H1 (cell line): ENCODE measurements at regions of chr10 and their contacts with region 1.

Region 1: DNA sequence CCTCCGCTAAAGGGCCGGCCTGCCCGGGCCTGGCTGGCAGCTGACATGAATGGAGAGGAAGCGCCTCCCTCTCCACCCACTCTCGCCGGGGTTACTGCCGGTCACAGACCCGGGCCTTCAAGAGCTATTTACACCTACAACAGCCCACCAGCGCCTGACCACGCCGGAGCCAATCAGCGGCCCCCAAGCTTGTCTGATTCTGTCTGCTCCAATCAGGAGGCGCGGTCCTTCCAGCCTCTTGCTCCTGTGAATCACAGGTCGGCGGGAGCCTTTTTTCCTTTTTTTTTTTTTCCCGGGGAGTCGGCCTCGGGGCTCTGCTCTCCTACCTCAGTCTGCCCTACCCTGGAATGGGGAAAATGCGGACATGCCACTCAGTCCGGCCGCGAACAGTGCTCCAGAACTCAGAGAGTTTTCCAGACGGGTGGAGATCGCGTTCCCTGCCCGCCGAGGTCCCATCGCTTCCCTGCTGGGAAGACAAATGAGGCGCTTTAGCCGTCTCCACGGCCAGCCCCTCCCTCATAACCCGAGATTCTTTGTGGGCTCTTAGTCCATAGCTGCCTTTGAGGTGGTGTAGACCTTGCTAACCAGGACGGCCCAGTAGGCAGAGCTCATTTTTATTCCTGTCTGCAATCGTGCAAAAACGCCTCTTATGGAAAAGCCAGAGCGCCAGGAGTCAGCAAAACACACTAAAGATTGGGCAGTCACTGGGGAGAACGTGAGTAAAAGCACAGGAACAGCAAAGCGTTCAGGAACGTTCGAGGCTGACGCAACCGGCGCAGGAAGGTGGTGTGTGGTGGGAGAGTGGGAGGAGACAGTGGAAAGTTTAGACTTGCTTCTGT is 26.5 kb downstream of the SCD start:
- DNase-seq: peak; percentile 91 to 98
- H3K4me3 ChIP-seq: peak overlapping the region; percentile 63 to 71 (median 66)
- H3K27ac ChIP-seq: peak overlapping the region; percentile 90
- H3K4me1 ChIP-seq: peaks cover 8 to 25% (median 9%) of the 10 kb centered on the region in 4 experiments
- H3K27me3 ChIP-seq: no peaks in the 10 kb centered on the region
- CTCF ChIP-seq: no peak
- EP300 ChIP-seq: peak in 1 of 2 experiments; percentile 10; a peak in 1 of 3 replicates
- POLR2A ChIP-seq: peak; percentile 44 to 58; a peak in 2 of 3 replicates
- RAD21 ChIP-seq: no peak

Region 2: GRCh38 chr10:100315615-100316014 is 57.9 kb before region 1 on chr10:
- CTCF ChIA-PET with region 1: no interaction called
- POLR2A ChIA-PET with region 1: no interaction called
- DNase-seq: no peak
- H3K4me3 ChIP-seq: no peak overlapping the region
- H3K27ac ChIP-seq: no peak overlapping the region
- H3K4me1 ChIP-seq: no peaks in the 10 kb centered on the region
- H3K27me3 ChIP-seq: no peaks in the 10 kb centered on the region; a peak in 1 of 7 replicates
- CTCF ChIP-seq: no peak
- EP300 ChIP-seq: no peak
- POLR2A ChIP-seq: no peak
- RAD21 ChIP-seq: no peak

Region 3: GRCh38 chr10:100346765-100347567 is 26.6 kb before region 1 on chr10 and contains the start of gene SCD:
- CTCF ChIA-PET with region 1: interaction called, 7 read pairs
- POLR2A ChIA-PET with region 1: interaction called, 85 read pairs
- DNase-seq: peak; percentile 86 to 91
- H3K4me3 ChIP-seq: peak within 1 kb of the TSS; percentile 85 to 95 (median 90)
- H3K27ac ChIP-seq: peak within 1 kb of the TSS; percentile 80
- H3K4me1 ChIP-seq: peaks cover 10 to 30% (median 20%) of the 10 kb centered on the region in 4 experiments
- H3K27me3 ChIP-seq: no peaks in the 10 kb centered on the region
- CTCF ChIP-seq: no peak
- EP300 ChIP-seq: peak in 1 of 2 experiments; percentile 32; a peak in 1 of 3 replicates
- POLR2A ChIP-seq: peak; percentile 25 to 82
- RAD21 ChIP-seq: no peak
- total RNA-seq, gene SCD: 604 and 621 TPM in 2 replicates

Region 4: DNA sequence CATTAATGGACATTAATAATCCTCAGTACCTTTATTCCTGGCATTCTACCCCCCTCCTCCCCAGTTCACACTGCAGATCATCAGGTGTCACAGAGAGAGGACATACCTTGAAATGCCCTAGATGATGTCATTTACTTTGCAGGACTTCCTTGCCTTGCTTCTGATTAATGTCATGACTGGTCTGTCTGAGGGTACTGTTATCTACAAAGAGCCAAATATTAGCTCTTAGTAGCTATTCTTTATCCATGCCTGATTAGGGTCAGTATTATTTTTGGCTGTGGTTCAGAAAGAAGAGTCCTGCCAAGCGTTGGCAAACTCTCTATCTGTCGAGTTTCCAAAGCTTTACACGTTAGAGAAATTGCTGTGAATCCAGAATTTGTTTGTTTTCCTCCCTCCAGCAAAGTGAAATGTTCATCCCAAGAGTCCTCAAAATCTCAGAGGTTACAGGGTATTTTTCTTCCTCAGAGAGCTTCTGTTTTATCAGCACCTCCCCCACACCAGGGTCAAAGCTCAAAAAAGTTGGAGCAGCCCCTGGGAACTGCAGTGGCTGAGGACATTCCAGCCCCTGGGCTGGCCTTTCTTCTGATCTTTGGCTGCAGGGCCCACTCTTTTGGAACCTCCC is 13.9 kb before region 1 on chr10:
- CTCF ChIA-PET with region 1: interaction called, 5 read pairs
- POLR2A ChIA-PET with region 1: interaction called, 20 read pairs
- DNase-seq: no peak
- H3K4me3 ChIP-seq: no peak overlapping the region
- H3K27ac ChIP-seq: no peak overlapping the region; the same call in 1 of the 2 replicates
- H3K4me1 ChIP-seq: peaks cover 0 to 8% (median 5%) of the 10 kb centered on the region in 4 experiments; a peak in 2 of 7 replicates
- H3K27me3 ChIP-seq: no peaks in the 10 kb centered on the region
- CTCF ChIP-seq: no peak
- EP300 ChIP-seq: no peak
- POLR2A ChIP-seq: peak in 1 of 2 experiments; percentile 24; a peak in 1 of 3 replicates
- RAD21 ChIP-seq: no peak

Region 5: DNA sequence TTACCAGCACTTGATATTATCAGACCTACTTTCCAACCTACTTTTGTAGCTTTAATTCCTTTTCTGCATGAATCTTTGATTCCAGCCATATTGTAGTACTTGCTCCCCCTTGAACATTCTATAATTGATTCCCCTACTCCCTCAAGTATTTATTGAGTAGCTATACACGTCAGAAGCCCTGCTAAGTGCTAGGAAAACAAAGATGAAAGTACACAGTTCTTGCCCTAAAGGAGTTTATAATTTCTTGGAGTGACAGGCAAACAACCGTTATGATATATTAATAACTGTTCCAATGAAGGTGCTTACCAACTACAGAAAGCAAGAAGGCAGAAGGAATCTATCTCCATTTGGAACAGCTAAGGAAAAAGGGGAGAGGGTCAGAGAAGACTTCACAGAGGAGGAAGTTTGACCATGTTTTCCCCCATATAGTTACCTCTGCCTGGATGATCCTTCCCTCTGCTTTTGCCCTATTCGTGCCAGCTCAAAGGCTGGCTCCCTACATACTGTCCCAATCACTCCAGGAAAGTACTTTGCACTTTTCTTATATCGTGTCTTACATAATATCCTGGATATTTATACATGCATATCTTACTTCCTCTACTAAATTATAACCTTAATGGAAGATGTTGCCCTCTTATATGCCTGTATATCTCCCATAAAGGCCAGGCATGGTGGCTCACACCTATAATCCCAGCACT is 28.3 kb after region 1 on chr10:
- CTCF ChIA-PET with region 1: no interaction called
- POLR2A ChIA-PET with region 1: interaction called, 12 read pairs
- DNase-seq: no peak
- H3K4me3 ChIP-seq: no peak overlapping the region
- H3K27ac ChIP-seq: no peak overlapping the region
- H3K4me1 ChIP-seq: no peaks in the 10 kb centered on the region
- H3K27me3 ChIP-seq: no peaks in the 10 kb centered on the region
- CTCF ChIP-seq: no peak
- EP300 ChIP-seq: no peak
- POLR2A ChIP-seq: no peak
- RAD21 ChIP-seq: no peak